Ascending aorta (tissue), 2 donors: ENCODE measurements at regions of chr12 and their contacts with region 1.

Region 1: GRCh38 chr12:56189176-56189917 is at the start of gene SMARCC2:
- DNase-seq: peak; percentile 39 to 94
- H3K4me3 ChIP-seq: peak within 1 kb of the TSS; percentile 68 to 91
- H3K27ac ChIP-seq: peak within 1 kb of the TSS; percentile 92 to 97
- H3K4me1 ChIP-seq: peaks cover 3 to 6% of the 10 kb centered on the region in 2 donors
- H3K27me3 ChIP-seq: no peaks in the 10 kb centered on the region
- CTCF ChIP-seq: peak; percentile 68 to 94 (median 70)
- total RNA-seq, gene SMARCC2: 53.9 TPM

Region 2: GRCh38 chr12:56007564-56008559 is 181.5 kb before region 1 on chr12:
- intact Hi-C with region 1: no loop called
- DNase-seq: peak in 1 of 2 donors; percentile 70
- H3K4me3 ChIP-seq: peak overlapping the region; percentile 78 to 98
- H3K27ac ChIP-seq: peak overlapping the region; percentile 93 to 97
- H3K4me1 ChIP-seq: peaks cover 0 to 2% of the 10 kb centered on the region in 2 donors
- H3K27me3 ChIP-seq: no peaks in the 10 kb centered on the region
- CTCF ChIP-seq: no peak

Region 3: GRCh38 chr12:56127888-56128669 is 61.3 kb before region 1 on chr12 and contains the start of gene ESYT1:
- intact Hi-C with region 1: loop called (anchors 1 kb)
- DNase-seq: peak; percentile 99 to 100
- H3K4me3 ChIP-seq: peak within 1 kb of the TSS; percentile 73 to 80
- H3K27ac ChIP-seq: peak within 1 kb of the TSS; percentile 87 to 88
- H3K4me1 ChIP-seq: peaks cover 9 to 21% of the 10 kb centered on the region in 2 donors
- H3K27me3 ChIP-seq: no peaks in the 10 kb centered on the region
- CTCF ChIP-seq: no peak
- total RNA-seq, gene ESYT1: 119 TPM

Region 4: GRCh38 chr12:56158029-56158925 is 31.1 kb before region 1 on chr12 and contains the start of gene MYL6:
- intact Hi-C with region 1: loop called (anchors 2 kb)
- DNase-seq: peak; percentile 95 to 99
- H3K4me3 ChIP-seq: peak within 1 kb of the TSS; percentile 83 to 96
- H3K27ac ChIP-seq: peak within 1 kb of the TSS; percentile 91 to 94
- H3K4me1 ChIP-seq: peaks cover 10 to 42% of the 10 kb centered on the region in 2 donors
- H3K27me3 ChIP-seq: no peaks in the 10 kb centered on the region
- CTCF ChIP-seq: no peak
- total RNA-seq, gene MYL6: 1,476 TPM

Region 5: DNA sequence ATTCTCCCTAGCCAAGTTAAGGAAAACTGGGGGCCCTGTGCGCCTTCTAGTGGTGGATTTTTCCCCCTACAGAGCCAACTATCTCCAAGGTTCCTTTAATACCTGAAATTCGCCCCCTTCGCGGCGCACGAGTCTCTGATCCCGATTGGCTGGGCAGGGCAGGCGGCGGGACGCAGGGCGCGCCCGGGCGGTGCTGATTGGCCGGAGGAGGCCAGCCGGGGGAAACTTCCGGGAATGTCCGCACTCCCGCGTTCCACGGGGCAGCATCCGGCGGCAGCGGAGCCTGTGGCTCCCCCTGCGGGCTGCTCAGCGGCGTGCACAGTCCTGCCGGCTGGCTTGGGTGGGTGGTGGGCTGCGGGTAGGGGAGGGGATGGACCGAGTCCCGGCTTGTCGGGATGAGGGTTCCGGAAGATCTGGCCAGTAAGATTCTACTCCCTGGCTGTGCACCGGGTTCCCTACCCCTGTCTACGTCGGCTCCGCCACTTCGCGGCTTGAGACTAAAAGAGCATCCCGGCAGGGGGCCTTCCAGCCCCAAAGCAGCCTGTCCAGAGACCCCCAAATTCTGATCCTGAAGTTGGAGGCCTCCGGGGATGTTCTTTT is 34.9 kb after region 1 on chr12 and contains the start of gene NABP2:
- intact Hi-C with region 1: loop called (anchors 1 kb)
- DNase-seq: peak; percentile 93 to 99
- H3K4me3 ChIP-seq: peak within 1 kb of the TSS; percentile 69 to 78
- H3K27ac ChIP-seq: peak within 1 kb of the TSS; percentile 98 to 100
- H3K4me1 ChIP-seq: peaks cover 16 to 36% of the 10 kb centered on the region in 2 donors
- H3K27me3 ChIP-seq: no peaks in the 10 kb centered on the region
- CTCF ChIP-seq: peak; percentile 82 to 96 (median 87)
- total RNA-seq, gene NABP2: 2.8 TPM

Region 6: DNA sequence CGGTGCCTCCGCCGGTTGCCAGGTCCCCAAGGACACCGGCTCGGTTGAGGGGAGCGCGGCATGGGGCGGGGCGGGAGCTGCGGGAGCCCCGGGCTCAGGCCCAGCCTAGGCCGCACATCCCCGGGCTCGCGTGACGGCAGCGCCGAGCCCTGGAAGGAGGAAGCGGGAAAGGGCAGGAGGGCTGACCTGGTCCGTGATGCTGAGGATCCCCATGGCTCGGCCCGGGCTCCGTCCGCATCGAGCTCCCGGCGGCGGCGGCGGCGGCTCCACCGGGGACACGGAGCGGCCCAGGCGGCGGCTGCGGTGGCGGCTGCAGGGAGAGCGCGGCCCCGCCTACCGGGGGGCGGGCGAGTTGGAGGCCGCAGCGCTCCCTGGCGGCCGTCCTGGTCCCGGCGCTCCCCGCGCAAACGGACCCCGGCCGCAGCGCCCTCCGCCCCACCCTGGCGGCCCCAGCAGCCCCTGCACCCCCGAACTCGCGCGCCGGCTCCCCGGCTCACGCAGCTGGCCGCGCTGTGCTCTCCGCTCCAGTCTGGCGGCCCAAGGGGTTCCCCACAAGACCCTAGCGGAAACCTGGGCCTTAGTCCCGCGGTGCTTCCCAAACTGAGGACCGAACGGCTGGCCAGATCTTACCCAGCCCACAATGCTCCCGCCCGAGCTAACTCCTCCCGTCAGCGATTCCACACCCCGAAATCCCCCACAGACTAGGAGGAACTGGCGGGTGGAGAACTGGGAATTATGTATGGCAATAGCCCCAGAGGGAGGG is 68.9 kb after region 1 on chr12 and contains the start of gene ANKRD52:
- intact Hi-C with region 1: loop called (anchors 2 kb)
- DNase-seq: peak in 1 of 2 donors; percentile 82
- H3K4me3 ChIP-seq: peak within 1 kb of the TSS; percentile 69 to 89
- H3K27ac ChIP-seq: peak within 1 kb of the TSS; percentile 75 to 89
- H3K4me1 ChIP-seq: peaks cover 3 to 19% of the 10 kb centered on the region in 2 donors
- H3K27me3 ChIP-seq: no peaks in the 10 kb centered on the region
- CTCF ChIP-seq: peak; percentile 24 to 95 (median 33)
- total RNA-seq, gene ANKRD52: 17.5 TPM

Region 7: DNA sequence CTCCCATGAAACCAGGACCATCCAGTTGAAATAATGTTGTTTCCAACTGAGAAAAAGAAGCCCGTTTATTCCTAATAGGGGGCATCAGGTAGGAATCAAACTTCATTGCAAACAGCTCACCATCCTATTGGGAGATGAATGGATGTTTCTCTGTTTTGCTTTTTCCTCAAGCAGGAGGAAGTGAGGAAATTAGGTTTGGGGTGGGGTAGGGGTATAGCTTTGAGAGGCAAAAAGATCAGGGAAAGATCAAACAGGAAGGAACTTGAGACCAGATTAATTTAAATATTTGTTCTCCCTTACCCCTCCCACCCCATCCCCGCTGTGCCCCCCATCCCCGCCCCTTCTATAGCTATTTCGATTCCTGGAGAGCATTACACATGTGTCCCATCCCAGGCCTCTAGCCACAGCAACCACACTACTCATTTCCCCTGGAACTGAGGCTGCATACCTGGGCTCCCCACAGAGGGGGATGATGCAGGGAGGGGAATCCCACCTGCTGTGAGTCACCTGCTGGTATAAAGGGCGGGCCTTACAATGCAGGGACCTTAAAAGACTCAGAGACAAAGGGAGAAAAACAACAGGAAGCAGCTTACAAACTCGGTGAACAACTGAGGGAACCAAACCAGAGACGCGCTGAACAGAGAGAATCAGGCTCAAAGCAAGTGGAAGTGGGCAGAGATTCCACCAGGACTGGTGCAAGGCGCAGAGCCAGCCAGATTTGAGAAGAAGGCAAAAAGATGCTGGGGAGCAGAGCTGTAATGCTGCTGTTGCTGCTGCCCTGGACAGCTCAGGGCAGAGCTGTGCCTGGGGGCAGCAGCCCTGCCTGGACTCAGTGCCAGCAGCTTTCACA is 149.2 kb after region 1 on chr12 and contains the start of gene IL23A:
- intact Hi-C with region 1: no loop called
- DNase-seq: no peak
- H3K4me3 ChIP-seq: no peak within 1 kb of the TSS
- H3K27ac ChIP-seq: no peak within 1 kb of the TSS
- H3K4me1 ChIP-seq: peaks cover 0 to 3% of the 10 kb centered on the region in 2 donors
- H3K27me3 ChIP-seq: no peaks in the 10 kb centered on the region
- CTCF ChIP-seq: no peak
- total RNA-seq, gene IL23A: not detected

Region 8: DNA sequence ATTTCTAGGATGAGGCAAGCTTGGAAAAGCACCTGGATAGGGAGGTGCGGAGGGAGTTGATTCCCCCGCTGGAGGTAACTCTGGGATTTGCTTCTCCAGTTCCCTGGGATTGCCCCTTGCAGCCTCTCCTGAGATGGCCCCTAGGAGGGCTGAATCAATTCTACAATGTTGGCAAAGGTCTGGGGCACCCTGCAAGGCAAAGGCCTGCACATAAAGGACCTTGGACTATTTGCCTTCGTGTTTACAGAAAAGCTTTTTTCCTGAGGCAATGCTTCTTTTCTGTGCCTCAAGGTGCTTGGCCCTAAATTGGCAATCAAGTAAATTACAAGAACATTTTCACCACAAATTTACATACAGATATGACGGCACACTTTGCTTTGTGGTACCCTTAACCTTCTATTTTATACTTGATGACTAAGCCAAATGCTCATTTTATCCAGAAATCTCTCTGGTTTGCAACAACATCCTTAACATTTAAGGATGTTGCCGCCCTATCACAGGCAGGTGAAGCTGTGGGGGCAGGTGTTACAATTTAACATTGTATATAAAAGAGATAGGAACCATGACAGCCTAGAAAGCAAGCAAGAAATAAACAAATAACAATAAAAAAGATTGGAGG is 219.6 kb after region 1 on chr12:
- intact Hi-C with region 1: no loop called
- DNase-seq: no peak
- H3K4me3 ChIP-seq: no peak overlapping the region
- H3K27ac ChIP-seq: no peak overlapping the region
- H3K4me1 ChIP-seq: no peaks in the 10 kb centered on the region
- H3K27me3 ChIP-seq: no peaks in the 10 kb centered on the region
- CTCF ChIP-seq: no peak

Region 9: GRCh38 chr12:56468216-56469006 is 279.1 kb after region 1 on chr12 and contains the start of gene SPRYD4:
- intact Hi-C with region 1: loop called (anchors 10 kb)
- DNase-seq: peak; percentile 81 to 96
- H3K4me3 ChIP-seq: peak within 1 kb of the TSS; percentile 58 to 85
- H3K27ac ChIP-seq: peak within 1 kb of the TSS; percentile 78 to 90
- H3K4me1 ChIP-seq: peaks cover 0 to 16% of the 10 kb centered on the region in 2 donors
- H3K27me3 ChIP-seq: no peaks in the 10 kb centered on the region
- CTCF ChIP-seq: peak in 2 of 3 experiments; percentile 38 to 47
- total RNA-seq, gene SPRYD4: 0.43 TPM